Right ventricle myocardium inferior (tissue), 1 donor: ENCODE measurements at regions of chr15 and their contacts with region 1.

Region 1: GRCh38 chr15:74545880-74546656 is 5.0 kb downstream of the ARID3B start:
- DNase-seq: peak; percentile 98
- ATAC-seq: peak; percentile 94

Region 2: GRCh38 chr15:74482661-74483060 is 63.4 kb before region 1 on chr15:
- intact Hi-C with region 1: no loop called
- DNase-seq: no peak
- ATAC-seq: no peak

Region 3: GRCh38 chr15:74565381-74566085 is 19.5 kb after region 1 on chr15:
- intact Hi-C with region 1: no loop called
- DNase-seq: no peak
- ATAC-seq: no peak

Region 4: GRCh38 chr15:74584779-74585178 is 38.7 kb after region 1 on chr15:
- intact Hi-C with region 1: loop called (anchors 5 kb)
- DNase-seq: no peak
- ATAC-seq: no peak